Naive thymus-derived CD4-positive, alpha-beta T cell (primary cell): ENCODE measurements at regions of chr20 and their contacts with region 1.

Region 1: DNA sequence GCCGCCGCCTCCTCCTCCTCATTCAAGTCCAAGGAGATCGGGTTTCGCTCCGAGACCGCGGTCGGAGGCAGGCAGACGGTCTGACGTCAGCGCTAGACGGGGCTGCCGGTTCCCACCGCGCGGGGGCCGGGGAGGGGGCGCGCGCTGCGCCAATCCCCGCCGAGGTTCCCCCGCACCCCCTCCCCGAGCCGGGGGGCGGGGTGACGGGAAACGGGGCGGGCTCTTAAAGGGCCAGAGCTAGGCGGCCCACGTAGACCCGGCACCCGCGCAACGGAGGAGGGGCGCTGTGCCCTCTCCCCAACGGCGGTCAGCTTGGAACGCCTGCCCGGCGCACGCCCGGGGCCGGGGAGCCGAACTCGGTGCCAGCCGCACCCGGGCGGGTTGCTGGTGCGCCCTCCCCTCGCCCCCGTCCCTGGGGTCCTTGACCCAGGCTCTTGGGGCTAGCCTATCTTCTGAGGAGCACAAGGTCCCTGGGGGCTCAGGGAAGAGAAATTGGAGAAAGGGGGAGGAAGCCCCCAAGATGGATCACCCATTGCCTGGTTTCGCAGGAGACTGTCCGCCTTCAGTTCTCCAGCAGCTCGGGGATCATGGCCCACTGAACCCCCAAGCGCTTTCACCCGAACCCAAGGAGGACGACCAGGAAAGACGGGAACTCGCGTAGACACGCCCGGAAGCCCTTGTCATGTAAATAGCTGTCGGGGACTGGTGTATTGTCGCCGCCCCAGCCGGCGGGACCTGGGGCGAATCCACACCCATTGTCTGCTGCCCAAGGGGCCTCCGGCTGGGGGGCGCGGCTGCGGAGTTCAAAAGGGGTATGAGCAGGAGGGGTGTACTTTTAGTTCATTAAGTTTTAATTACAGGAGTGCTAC is at the start of gene PMEPA1:
- DNase-seq: peak; percentile 91 to 95 (median 93)
- ATAC-seq: peak; percentile 96
- H3K4me3 ChIP-seq: peak within 1 kb of the TSS; percentile 98
- H3K4me3 Mint-ChIP-seq: peak within 1 kb of the TSS; percentile 82 to 97 (median 94)
- H3K27ac ChIP-seq: peak within 1 kb of the TSS; percentile 88
- H3K27ac Mint-ChIP-seq: peak within 1 kb of the TSS; percentile 46 to 97 (median 95)
- H3K4me1 ChIP-seq: peaks cover 11 to 23% of the 10 kb centered on the region in 2 donors
- H3K4me1 Mint-ChIP-seq: peaks cover 15 to 55% (median 44%) of the 10 kb centered on the region in 7 donors
- H3K27me3 ChIP-seq: peaks cover 0 to 7% of the 10 kb centered on the region in 2 donors
- H3K27me3 Mint-ChIP-seq: peaks cover 0 to 51% (median 0%) of the 10 kb centered on the region in 5 donors
- total RNA-seq, gene PMEPA1: 0.44 to 10.0 (median 9.0) TPM

Region 2: GRCh38 chr20:57748601-57749130 is 38.5 kb after region 1 on chr20:
- CTCF ChIA-PET with region 1: no interaction called
- POLR2A ChIA-PET with region 1: no interaction called
- intact Hi-C with region 1: loop called in 1 of 2 experiments (anchors 2 kb)
- DNase-seq: peak; percentile 9 to 63 (median 37)
- ATAC-seq: peak; percentile 80
- H3K4me3 ChIP-seq: peak overlapping the region; percentile 48
- H3K4me3 Mint-ChIP-seq: peak overlapping the region; percentile 76 to 92 (median 84)
- H3K27ac ChIP-seq: no peak overlapping the region
- H3K27ac Mint-ChIP-seq: peak overlapping the region in 3 of 9 donors; percentile 60 to 73 (median 67)
- H3K4me1 ChIP-seq: no peaks in the 10 kb centered on the region
- H3K4me1 Mint-ChIP-seq: peaks cover 5 to 21% (median 11%) of the 10 kb centered on the region in 7 donors
- H3K27me3 ChIP-seq: no peaks in the 10 kb centered on the region
- H3K27me3 Mint-ChIP-seq: peaks cover 14 to 39% (median 22%) of the 10 kb centered on the region in 5 donors

Region 3: GRCh38 chr20:58659841-58660240 is 949.7 kb after region 1 on chr20:
- CTCF ChIA-PET with region 1: no interaction called
- POLR2A ChIA-PET with region 1: no interaction called
- intact Hi-C with region 1: loop called in 1 of 2 experiments (anchors 5 kb)
- DNase-seq: peak in 1 of 9 donors; percentile 29
- ATAC-seq: peak; percentile 26
- H3K4me3 ChIP-seq: peak overlapping the region; percentile 2
- H3K4me3 Mint-ChIP-seq: peak overlapping the region; percentile 73 to 89 (median 82)
- H3K27ac ChIP-seq: peak overlapping the region; percentile 93
- H3K27ac Mint-ChIP-seq: peak overlapping the region; percentile 89 to 100 (median 98)
- H3K4me1 ChIP-seq: peaks cover 63 to 64% of the 10 kb centered on the region in 2 donors
- H3K4me1 Mint-ChIP-seq: peaks cover 66 to 97% (median 88%) of the 10 kb centered on the region in 7 donors
- H3K27me3 ChIP-seq: no peaks in the 10 kb centered on the region
- H3K27me3 Mint-ChIP-seq: no peaks in the 10 kb centered on the region